WTC11 (cell line): ENCODE measurements at regions of chr19 and their contacts with region 1.

Region 1: GRCh38 chr19:10864538-10864899 is 6.8 kb upstream of the CARM1 start:
- DNase-seq: peak; percentile 91
- ATAC-seq: peak; percentile 91
- H3K4me3 Mint-ChIP-seq: no peak overlapping the region
- H3K27ac Mint-ChIP-seq: no peak overlapping the region
- H3K4me1 Mint-ChIP-seq: peaks cover 8% of the 10 kb centered on the region
- H3K27me3 Mint-ChIP-seq: no peaks in the 10 kb centered on the region; the same call in 1 of the 2 replicates
- CTCF ChIP-seq: peak; percentile 83

Region 2: DNA sequence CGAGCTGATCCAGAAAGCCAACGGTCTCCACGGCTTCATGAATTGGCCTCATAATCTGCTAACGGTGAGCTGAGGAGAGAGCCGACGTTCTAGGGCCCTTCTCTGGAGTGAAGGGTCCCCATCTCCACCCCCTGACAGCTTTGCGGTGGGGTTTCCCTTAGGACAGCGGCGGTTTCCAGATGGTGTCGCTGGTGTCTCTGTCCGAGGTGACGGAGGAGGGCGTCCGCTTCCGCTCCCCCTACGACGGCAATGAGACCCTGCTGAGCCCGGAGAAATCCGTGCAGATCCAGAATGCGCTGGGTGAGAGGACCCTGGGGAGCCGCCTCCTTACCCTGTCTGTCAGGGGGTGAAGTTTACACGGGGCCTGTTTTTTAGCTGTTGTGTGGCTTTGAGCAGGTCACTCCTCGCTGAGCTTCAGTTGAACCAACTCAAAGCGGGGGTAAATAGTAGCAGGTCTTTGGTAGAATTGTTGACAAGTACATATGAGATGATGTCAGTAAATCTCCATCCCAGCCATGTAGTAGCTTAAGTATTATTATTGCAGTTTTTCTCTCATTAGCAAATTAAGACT is 162.5 kb before region 1 on chr19:
- CTCF ChIA-PET with region 1: interaction called, 12 read pairs
- POLR2A ChIA-PET with region 1: no interaction called
- DNase-seq: peak; percentile 64
- ATAC-seq: peak; percentile 76
- H3K4me3 Mint-ChIP-seq: peak overlapping the region; percentile 87
- H3K27ac Mint-ChIP-seq: peak overlapping the region; percentile 71
- H3K4me1 Mint-ChIP-seq: peaks cover 5% of the 10 kb centered on the region; the same call in 1 of the 2 replicates
- H3K27me3 Mint-ChIP-seq: peaks cover 5% of the 10 kb centered on the region
- CTCF ChIP-seq: no peak

Region 3: GRCh38 chr19:10828981-10829821 is 35.3 kb before region 1 on chr19:
- CTCF ChIA-PET with region 1: interaction called, 135 read pairs
- POLR2A ChIA-PET with region 1: no interaction called
- DNase-seq: peak; percentile 56
- ATAC-seq: peak; percentile 70
- H3K4me3 Mint-ChIP-seq: no peak overlapping the region
- H3K27ac Mint-ChIP-seq: no peak overlapping the region; the same call in 1 of the 2 replicates
- H3K4me1 Mint-ChIP-seq: no peaks in the 10 kb centered on the region
- H3K27me3 Mint-ChIP-seq: no peaks in the 10 kb centered on the region
- CTCF ChIP-seq: no peak

Region 4: GRCh38 chr19:10842788-10843187 is 21.7 kb before region 1 on chr19:
- CTCF ChIA-PET with region 1: interaction called, 135 read pairs
- POLR2A ChIA-PET with region 1: no interaction called
- DNase-seq: no peak
- ATAC-seq: no peak
- H3K4me3 Mint-ChIP-seq: no peak overlapping the region
- H3K27ac Mint-ChIP-seq: no peak overlapping the region
- H3K4me1 Mint-ChIP-seq: peaks cover 4% of the 10 kb centered on the region; the same call in 1 of the 2 replicates
- H3K27me3 Mint-ChIP-seq: peaks cover 23% of the 10 kb centered on the region
- CTCF ChIP-seq: no peak

Region 5: GRCh38 chr19:10884274-10884673 is 19.8 kb after region 1 on chr19:
- CTCF ChIA-PET with region 1: interaction called, 37 read pairs
- POLR2A ChIA-PET with region 1: no interaction called
- DNase-seq: no peak
- ATAC-seq: no peak
- H3K4me3 Mint-ChIP-seq: no peak overlapping the region
- H3K27ac Mint-ChIP-seq: no peak overlapping the region
- H3K4me1 Mint-ChIP-seq: peaks cover 73% of the 10 kb centered on the region
- H3K27me3 Mint-ChIP-seq: no peaks in the 10 kb centered on the region
- CTCF ChIP-seq: no peak